AG04450 (cell line): ENCODE measurements at regions of chr3 and their contacts with region 1.

Region 1: DNA sequence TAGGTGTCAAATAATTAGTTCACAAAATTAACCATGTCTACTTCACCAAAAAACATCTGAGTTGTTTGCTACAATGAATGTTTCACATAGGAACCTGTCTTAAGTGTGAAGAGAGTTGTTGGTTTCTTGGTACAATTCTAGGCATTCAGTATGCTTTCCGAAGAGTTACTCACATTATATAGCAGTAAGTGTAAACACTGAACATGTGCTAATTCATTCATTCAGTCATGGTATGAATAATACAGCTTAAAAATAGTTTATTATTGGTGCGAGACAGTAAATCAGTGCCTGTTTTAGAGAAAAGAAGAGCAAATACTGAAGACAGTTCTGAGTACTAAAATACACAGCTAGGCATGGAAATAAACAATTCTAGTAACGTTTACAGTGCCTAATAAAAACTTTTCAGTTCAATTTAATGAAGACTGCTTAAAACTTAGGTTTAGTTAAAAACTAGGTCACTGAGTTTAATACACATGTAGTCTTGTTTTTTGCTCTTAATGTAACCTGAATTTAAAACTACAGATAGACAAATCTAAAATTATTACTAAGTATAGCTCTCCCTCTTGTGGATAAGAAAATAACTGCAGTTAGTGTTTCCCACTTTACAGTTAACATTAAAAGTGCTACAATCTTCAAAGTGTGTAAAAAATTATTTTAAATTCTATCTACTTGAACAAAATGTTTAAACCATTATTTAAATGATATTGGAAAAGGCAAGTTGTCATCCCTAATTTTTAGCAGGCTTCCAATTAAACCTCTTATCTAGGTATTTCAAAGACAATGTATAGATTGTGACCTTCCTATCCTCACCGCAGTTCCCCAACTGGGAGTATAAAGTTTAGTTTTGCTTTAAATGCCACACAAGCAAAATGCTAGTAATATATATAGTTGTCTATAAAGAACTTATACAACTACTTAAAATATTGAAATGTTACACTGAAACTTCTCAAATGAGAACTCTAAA is 20.1 kb upstream of the ZCWPW2 start:
- DNase-seq: no peak
- H3K4me3 ChIP-seq: no peak overlapping the region
- H3K27ac ChIP-seq: no peak overlapping the region
- H3K27me3 ChIP-seq: no peaks in the 10 kb centered on the region
- CTCF ChIP-seq: peak; percentile 57

Region 2: GRCh38 chr3:28253040-28253715 is 75.3 kb before region 1 on chr3:
- CTCF ChIA-PET with region 1: no interaction called
- POLR2A ChIA-PET with region 1: no interaction called
- DNase-seq: no peak
- H3K4me3 ChIP-seq: no peak overlapping the region
- H3K27ac ChIP-seq: no peak overlapping the region
- H3K27me3 ChIP-seq: no peaks in the 10 kb centered on the region
- CTCF ChIP-seq: no peak

Region 3: GRCh38 chr3:28317438-28318022 is 10.9 kb before region 1 on chr3:
- CTCF ChIA-PET with region 1: interaction called, 22 read pairs
- POLR2A ChIA-PET with region 1: no interaction called
- DNase-seq: no peak
- H3K4me3 ChIP-seq: no peak overlapping the region
- H3K27ac ChIP-seq: no peak overlapping the region
- H3K27me3 ChIP-seq: no peaks in the 10 kb centered on the region
- CTCF ChIP-seq: peak; percentile 65

Region 4: DNA sequence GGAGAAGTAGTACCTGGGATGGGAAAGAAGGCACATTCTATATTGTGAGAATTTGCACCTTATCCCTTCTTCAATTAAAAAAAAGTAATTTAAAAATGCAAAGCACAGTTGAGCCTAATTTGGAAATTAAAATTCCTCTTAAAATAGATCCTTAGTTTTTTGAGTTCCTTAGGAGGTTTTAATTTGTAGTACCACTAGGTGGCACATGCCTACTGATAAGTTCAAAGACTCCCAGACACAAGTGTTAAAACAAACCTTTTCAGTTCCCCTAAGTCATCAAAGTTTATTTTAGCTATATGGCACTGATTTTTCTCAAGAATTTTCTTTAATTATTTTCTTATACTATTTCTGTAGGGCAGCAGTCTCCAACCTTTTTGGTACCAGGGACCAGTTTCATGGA is 147.7 kb after region 1 on chr3:
- CTCF ChIA-PET with region 1: no interaction called
- POLR2A ChIA-PET with region 1: no interaction called
- DNase-seq: peak; percentile 11
- H3K4me3 ChIP-seq: no peak overlapping the region
- H3K27ac ChIP-seq: no peak overlapping the region
- H3K27me3 ChIP-seq: no peaks in the 10 kb centered on the region
- CTCF ChIP-seq: peak; percentile 70